Heart right ventricle (tissue), 16 donors: ENCODE measurements at regions of chr5 and their contacts with region 1.

Region 1: DNA sequence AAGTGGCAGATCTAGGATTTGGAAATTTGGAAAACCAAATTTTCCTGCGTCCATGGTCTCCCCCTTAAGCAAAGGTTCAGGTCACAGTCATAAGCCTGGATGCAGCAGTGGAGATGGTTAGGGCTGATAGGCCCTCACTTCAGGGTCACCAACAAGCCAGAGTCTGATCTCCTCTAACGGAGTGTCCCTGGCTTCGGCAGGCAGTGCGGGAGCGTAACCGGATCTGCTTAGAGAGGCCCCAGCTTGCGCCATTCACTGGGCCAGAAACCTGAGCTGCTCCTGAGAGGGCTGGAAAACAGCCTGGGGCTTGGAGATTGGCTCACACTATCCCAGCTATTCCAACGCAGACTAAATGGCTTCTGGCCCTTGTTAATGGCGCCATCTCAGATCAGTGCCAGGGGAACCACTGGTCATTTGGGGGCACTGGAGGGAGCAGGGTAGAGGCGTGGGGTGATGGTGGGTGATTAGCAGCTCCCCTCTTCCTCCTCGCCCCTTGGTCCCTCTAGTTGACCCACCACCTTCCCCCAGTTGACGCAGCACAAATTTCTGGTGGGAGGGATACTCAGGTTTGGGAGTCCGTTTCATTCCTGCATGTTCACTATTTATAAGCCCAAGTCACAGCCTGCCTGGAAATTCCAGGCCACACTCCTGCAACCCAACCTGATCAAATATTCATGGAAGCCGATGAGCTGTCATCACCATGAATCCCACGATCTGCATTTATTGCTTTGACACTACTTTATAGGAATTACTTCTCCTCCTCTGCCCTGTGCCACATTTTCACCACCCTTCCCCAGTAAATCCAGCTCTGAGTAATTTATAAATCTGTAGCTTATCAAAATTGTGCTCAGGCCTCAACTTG is 134.6 kb upstream of the CPEB4 start:
- DNase-seq: peak; percentile 58 to 60
- ATAC-seq: peak; percentile 80 to 93 (median 90)
- H3K4me3 ChIP-seq: no peak overlapping the region
- H3K27ac ChIP-seq: peak overlapping the region; percentile 35 to 77 (median 60)
- H3K4me1 ChIP-seq: peaks cover 0 to 28% (median 0%) of the 10 kb centered on the region in 9 donors
- H3K27me3 ChIP-seq: no peaks in the 10 kb centered on the region
- CTCF ChIP-seq: no peak

Region 2: DNA sequence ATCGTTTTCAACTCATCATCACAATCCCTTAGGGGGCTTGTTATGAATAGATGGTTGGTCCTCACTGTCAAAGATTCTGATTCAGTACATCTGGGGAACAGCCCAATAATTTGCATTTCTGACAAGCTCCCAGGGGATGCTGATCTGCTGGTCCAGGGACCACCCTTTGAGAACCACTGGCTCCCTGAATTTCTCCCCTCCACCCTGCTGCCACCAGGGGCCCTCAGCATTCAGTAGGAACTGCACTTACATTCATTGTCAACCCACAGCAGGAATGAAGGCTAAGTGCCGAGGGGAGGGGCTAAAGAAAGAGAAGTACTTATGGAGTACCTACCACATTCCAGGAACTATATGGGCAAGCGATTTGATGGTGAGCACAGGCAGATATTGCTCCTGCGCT is 223.0 kb before region 1 on chr5:
- intact Hi-C with region 1: no loop called
- DNase-seq: no peak
- ATAC-seq: no peak
- H3K4me3 ChIP-seq: no peak overlapping the region
- H3K27ac ChIP-seq: no peak overlapping the region
- H3K4me1 ChIP-seq: no peaks in the 10 kb centered on the region
- H3K27me3 ChIP-seq: no peaks in the 10 kb centered on the region
- CTCF ChIP-seq: no peak

Region 3: GRCh38 chr5:173625696-173626504 is 127.6 kb before region 1 on chr5:
- intact Hi-C with region 1: loop called in 3 of 10 experiments (anchors 5 to 10 kb)
- DNase-seq: no peak
- ATAC-seq: peak; percentile 44 to 82 (median 62)
- H3K4me3 ChIP-seq: no peak overlapping the region
- H3K27ac ChIP-seq: peak overlapping the region in 2 of 10 donors; percentile 15 to 16
- H3K4me1 ChIP-seq: peaks cover 0 to 16% (median 9%) of the 10 kb centered on the region in 9 donors
- H3K27me3 ChIP-seq: no peaks in the 10 kb centered on the region
- CTCF ChIP-seq: peak in 5 of 9 donors; percentile 13 to 48 (median 39)

Region 4: GRCh38 chr5:173707392-173707791 is 46.1 kb before region 1 on chr5:
- intact Hi-C with region 1: loop called in 2 of 10 experiments (anchors 5 kb)
- DNase-seq: peak; percentile 53 to 76
- ATAC-seq: peak; percentile 82 to 92 (median 88)
- H3K4me3 ChIP-seq: no peak overlapping the region
- H3K27ac ChIP-seq: peak overlapping the region in 9 of 10 donors; percentile 28 to 78 (median 68)
- H3K4me1 ChIP-seq: peaks cover 3 to 34% (median 20%) of the 10 kb centered on the region in 9 donors
- H3K27me3 ChIP-seq: no peaks in the 10 kb centered on the region
- CTCF ChIP-seq: no peak

Region 5: GRCh38 chr5:173764321-173765029 is 10.9 kb after region 1 on chr5:
- intact Hi-C with region 1: no loop called
- DNase-seq: peak; percentile 79
- ATAC-seq: peak; percentile 24 to 82 (median 66)
- H3K4me3 ChIP-seq: no peak overlapping the region
- H3K27ac ChIP-seq: peak overlapping the region; percentile 2 to 91 (median 76)
- H3K4me1 ChIP-seq: peaks cover 0 to 58% (median 26%) of the 10 kb centered on the region in 9 donors
- H3K27me3 ChIP-seq: no peaks in the 10 kb centered on the region
- CTCF ChIP-seq: no peak

Region 6: GRCh38 chr5:173778784-173779304 is 25.3 kb after region 1 on chr5:
- intact Hi-C with region 1: no loop called
- DNase-seq: no peak
- ATAC-seq: no peak
- H3K4me3 ChIP-seq: no peak overlapping the region
- H3K27ac ChIP-seq: peak overlapping the region in 1 of 10 donors; percentile 71
- H3K4me1 ChIP-seq: peaks cover 0 to 72% (median 14%) of the 10 kb centered on the region in 9 donors
- H3K27me3 ChIP-seq: no peaks in the 10 kb centered on the region
- CTCF ChIP-seq: no peak